Panc1 (cell line): ENCODE measurements at regions of chr12 and their contacts with region 1.

Region 1: GRCh38 chr12:5442251-5443006 is 10.5 kb downstream of the NTF3 start:
- DNase-seq: no peak
- ATAC-seq: 0 out of 2 replicates have a peak, but pooled peaks have one; percentile 63
- H3K4me3 ChIP-seq: no peak overlapping the region
- H3K27ac ChIP-seq: no peak overlapping the region
- H3K4me1 ChIP-seq: no peaks in the 10 kb centered on the region
- H3K27me3 ChIP-seq: peaks cover 3% of the 10 kb centered on the region; the same call in 1 of the 2 replicates
- CTCF ChIP-seq: peak; percentile 66

Region 2: DNA sequence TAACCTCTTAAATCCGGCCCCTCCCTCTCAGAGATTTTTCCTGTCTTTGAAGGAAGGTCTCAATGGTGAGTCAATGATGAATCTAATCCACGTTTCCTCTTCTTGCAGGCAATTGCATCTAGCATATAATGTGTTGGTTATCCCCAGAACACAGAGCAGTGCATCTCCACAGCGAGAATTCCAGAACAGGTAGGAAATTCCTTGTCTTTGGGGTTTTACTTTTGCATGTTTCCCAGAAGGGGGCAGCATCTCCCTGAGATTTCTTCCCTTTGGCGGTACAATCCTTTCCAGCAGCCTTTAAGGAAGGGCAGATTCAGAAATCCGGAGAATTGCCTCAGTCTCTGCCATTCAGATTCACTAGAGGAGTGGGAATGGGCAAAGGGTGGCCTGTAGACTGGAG is 270.7 kb before region 1 on chr12:
- CTCF ChIA-PET with region 1: no interaction called
- POLR2A ChIA-PET with region 1: no interaction called
- in situ Hi-C with region 1: no loop called
- intact Hi-C with region 1: loop called (anchors 5 kb)
- DNase-seq: peak; percentile 2
- ATAC-seq: peak; percentile 51; the same call in 1 of the 2 replicates
- H3K4me3 ChIP-seq: no peak overlapping the region
- H3K27ac ChIP-seq: no peak overlapping the region
- H3K4me1 ChIP-seq: no peaks in the 10 kb centered on the region
- H3K27me3 ChIP-seq: no peaks in the 10 kb centered on the region
- CTCF ChIP-seq: peak; percentile 64

Region 3: GRCh38 chr12:5614256-5614655 is 171.8 kb after region 1 on chr12:
- CTCF ChIA-PET with region 1: no interaction called
- POLR2A ChIA-PET with region 1: no interaction called
- in situ Hi-C with region 1: no loop called
- intact Hi-C with region 1: no loop called
- DNase-seq: no peak
- ATAC-seq: no peak
- H3K4me3 ChIP-seq: no peak overlapping the region
- H3K27ac ChIP-seq: no peak overlapping the region
- H3K4me1 ChIP-seq: no peaks in the 10 kb centered on the region
- H3K27me3 ChIP-seq: no peaks in the 10 kb centered on the region
- CTCF ChIP-seq: no peak

Region 4: DNA sequence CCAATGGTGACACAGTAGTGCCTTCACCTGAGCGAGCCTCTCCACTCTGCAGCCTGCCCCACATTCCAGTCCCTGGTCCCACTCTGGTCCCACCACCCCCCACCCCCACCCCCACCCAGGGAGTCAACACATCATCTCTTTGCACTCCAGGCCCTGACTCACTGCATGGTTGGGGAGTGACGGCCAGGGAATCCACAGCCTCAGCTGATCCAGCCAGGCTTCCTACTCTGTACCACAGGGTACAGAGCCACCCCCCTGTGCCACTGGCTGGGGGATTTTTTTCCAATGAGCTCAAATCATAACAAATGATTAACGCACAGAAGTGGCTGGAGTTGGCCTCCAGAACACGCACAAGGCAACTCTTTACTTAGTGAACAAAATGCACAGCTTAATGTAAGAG is 223.2 kb after region 1 on chr12:
- CTCF ChIA-PET with region 1: no interaction called
- POLR2A ChIA-PET with region 1: no interaction called
- in situ Hi-C with region 1: no loop called
- intact Hi-C with region 1: no loop called
- DNase-seq: no peak
- ATAC-seq: no peak
- H3K4me3 ChIP-seq: no peak overlapping the region
- H3K27ac ChIP-seq: no peak overlapping the region
- H3K4me1 ChIP-seq: no peaks in the 10 kb centered on the region
- H3K27me3 ChIP-seq: no peaks in the 10 kb centered on the region
- CTCF ChIP-seq: no peak